ENCODE measurements at regions of chr20 and their contacts with region 1.

Region 1: GRCh38 chr20:1274485-1275311 is 8.6 kb downstream of the SNPH start:
- DNase-seq: no peak
- H3K4me3 ChIP-seq: no peak overlapping the region
- H3K27ac ChIP-seq: no peak overlapping the region
- H3K4me1 ChIP-seq: no peaks in the 10 kb centered on the region
- H3K27me3 ChIP-seq: no peaks in the 10 kb centered on the region
- CTCF ChIP-seq: no peak

Region 2: DNA sequence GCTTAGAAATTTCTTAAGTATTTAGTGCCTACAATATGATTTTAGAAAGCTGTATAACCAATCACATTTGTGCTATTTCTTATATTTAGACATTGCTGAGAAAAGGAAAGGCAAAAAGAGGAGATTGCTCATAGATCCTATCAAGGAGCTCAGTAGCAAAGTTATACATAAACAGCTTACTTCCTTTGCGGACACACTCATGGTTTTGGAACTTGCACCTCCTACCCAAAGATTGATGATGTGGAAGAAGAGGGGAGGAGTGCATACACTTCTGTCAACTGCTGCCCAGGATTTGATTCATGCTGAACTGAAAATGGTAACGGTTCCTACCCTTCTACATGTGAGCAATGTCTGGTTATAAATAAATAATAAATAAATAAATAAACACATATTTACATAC is 32.2 kb before region 1 on chr20:
- CTCF ChIA-PET with region 1: no interaction called
- dilution Hi-C with region 1: loop called (anchors 5 kb)
- in situ Hi-C with region 1: no loop called
- intact Hi-C with region 1: no loop called
- DNase-seq: peak; percentile 34
- H3K4me3 ChIP-seq: no peak overlapping the region
- H3K27ac ChIP-seq: no peak overlapping the region
- H3K4me1 ChIP-seq: no peaks in the 10 kb centered on the region
- H3K27me3 ChIP-seq: peaks cover 9% of the 10 kb centered on the region
- CTCF ChIP-seq: no peak

Region 3: GRCh38 chr20:1341561-1342265 is 67.0 kb after region 1 on chr20:
- CTCF ChIA-PET with region 1: no interaction called
- dilution Hi-C with region 1: loop called (anchors 5 kb)
- in situ Hi-C with region 1: no loop called
- intact Hi-C with region 1: no loop called
- DNase-seq: no peak
- H3K4me3 ChIP-seq: no peak overlapping the region
- H3K27ac ChIP-seq: no peak overlapping the region
- H3K4me1 ChIP-seq: peaks cover 7% of the 10 kb centered on the region
- H3K27me3 ChIP-seq: no peaks in the 10 kb centered on the region
- CTCF ChIP-seq: no peak